GM12878 (cell line): ENCODE measurements at regions of chr4 and their contacts with region 1.

Region 1: DNA sequence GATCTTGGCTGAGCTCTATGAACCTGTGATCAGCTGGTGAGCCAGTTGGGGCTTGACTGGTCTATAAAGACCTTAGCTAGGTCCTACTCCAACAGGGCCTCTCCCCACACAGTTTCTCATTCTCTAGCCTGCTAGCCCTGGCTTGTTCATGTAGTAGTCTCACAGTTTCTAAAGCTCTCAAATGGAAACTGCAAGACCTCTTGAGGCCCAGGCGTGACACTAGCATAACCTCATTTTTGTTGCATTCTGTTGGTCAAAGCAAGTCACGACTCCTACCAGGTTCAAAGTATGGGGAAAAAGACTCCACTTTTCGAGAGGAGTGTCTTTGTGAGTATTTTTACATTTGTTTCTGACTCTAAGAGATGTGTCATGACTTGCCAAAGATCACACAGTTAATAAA is 50.9 kb downstream of the CEP44 start:
- DNase-seq: peak; percentile 40
- ATAC-seq: peak; percentile 98
- H3K4me3 ChIP-seq: no peak overlapping the region
- H3K27ac ChIP-seq: peak overlapping the region; percentile 65; the same call in 1 of the 2 replicates
- H3K4me1 ChIP-seq: peaks cover 7% of the 10 kb centered on the region; the same call in 1 of the 2 replicates
- H3K27me3 ChIP-seq: no peaks in the 10 kb centered on the region
- CTCF ChIP-seq: no peak
- EP300 ChIP-seq: no peak
- POLR2A ChIP-seq: no peak
- RAD21 ChIP-seq: 0 out of 2 replicates have a peak, but pooled peaks have one; percentile 12

Region 2: DNA sequence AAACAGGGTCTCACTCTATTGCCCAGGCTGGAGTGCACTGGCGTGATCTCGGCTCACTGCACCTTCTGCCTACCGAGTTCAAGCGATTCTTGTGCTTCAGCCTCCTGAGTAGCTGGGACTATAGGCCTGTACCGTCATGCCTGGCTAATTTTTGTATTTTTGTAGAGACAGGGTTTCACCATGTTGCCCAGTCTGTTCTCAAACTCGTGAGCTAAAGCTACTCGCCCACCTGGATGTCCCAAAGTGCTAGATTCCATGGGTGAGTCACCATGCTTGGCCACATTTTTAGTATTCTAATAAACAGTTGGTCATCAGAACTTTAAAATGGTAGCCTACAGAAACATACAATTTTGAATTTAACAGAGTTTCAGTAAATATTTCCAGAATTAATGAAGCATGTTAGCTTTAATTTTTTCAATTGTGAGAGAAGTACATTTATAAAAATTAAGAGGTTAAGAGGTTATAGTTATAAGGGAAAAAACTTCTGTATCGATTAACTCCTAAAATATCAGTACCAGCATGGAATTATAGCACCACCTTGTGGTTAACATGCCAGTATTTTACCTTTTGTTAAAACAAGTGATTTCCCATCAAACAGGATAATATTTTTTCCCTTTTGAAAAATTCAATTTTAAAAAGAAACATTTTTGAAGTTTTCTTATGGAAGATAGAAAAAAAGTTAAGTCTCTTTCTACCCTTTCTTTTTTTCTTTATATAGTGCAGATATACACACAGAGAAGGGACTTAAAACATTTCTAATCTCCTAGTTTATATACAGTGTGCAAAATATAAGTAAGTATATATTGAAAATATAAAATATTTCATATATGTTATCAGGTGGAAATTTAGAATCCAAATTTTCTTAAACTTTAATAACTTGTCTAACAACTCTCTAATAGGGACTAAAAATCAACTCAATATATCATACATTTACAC is 15.5 kb before region 1 on chr4:
- CTCF ChIA-PET with region 1: interaction called, 10 read pairs
- POLR2A ChIA-PET with region 1: no interaction called
- RAD21 ChIA-PET with region 1: no interaction called
- SMC1A ChIA-PET with region 1: interaction called, 5 read pairs
- in situ Hi-C with region 1: no loop called
- intact Hi-C with region 1: no loop called
- DNase-seq: no peak
- ATAC-seq: peak; percentile 55
- H3K4me3 ChIP-seq: no peak overlapping the region
- H3K27ac ChIP-seq: no peak overlapping the region
- H3K4me1 ChIP-seq: no peaks in the 10 kb centered on the region
- H3K27me3 ChIP-seq: no peaks in the 10 kb centered on the region
- CTCF ChIP-seq: peak; percentile 42 to 67 (median 46); a peak in 5 of 6 replicates
- EP300 ChIP-seq: no peak
- POLR2A ChIP-seq: no peak
- RAD21 ChIP-seq: peak; percentile 76

Region 3: GRCh38 chr4:174358829-174359228 is 24.2 kb after region 1 on chr4:
- CTCF ChIA-PET with region 1: interaction called, 5 read pairs
- POLR2A ChIA-PET with region 1: interaction called, 3 read pairs
- RAD21 ChIA-PET with region 1: interaction called, 15 read pairs
- SMC1A ChIA-PET with region 1: interaction called, 8 read pairs
- in situ Hi-C with region 1: no loop called
- intact Hi-C with region 1: no loop called
- DNase-seq: peak; percentile 40
- ATAC-seq: peak; percentile 97
- H3K4me3 ChIP-seq: no peak overlapping the region
- H3K27ac ChIP-seq: no peak overlapping the region
- H3K4me1 ChIP-seq: peaks cover 14% of the 10 kb centered on the region
- H3K27me3 ChIP-seq: no peaks in the 10 kb centered on the region
- CTCF ChIP-seq: no peak
- EP300 ChIP-seq: peak; percentile 53 to 70; a peak in 3 of 4 replicates
- POLR2A ChIP-seq: no peak
- RAD21 ChIP-seq: no peak

Region 4: DNA sequence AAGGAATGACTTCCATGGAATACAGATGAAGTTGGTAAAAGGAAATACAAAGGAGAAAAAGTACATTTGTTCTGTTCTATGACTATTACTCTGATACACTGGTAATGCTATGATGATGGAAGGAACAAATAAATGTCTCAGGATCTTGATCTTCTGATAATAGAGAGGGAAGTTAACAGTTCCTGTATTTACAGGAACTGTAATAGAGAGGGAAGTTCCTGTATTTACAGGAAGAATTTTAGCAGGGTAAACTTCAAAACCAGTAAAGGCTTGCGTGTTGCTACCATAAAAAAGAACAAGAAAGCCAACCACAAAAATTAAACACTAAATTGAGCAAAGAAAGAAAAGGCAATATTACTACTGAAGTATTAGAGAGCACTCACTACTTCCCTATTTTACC is 279.4 kb after region 1 on chr4:
- CTCF ChIA-PET with region 1: no interaction called
- POLR2A ChIA-PET with region 1: no interaction called
- RAD21 ChIA-PET with region 1: no interaction called
- SMC1A ChIA-PET with region 1: no interaction called
- in situ Hi-C with region 1: no loop called
- intact Hi-C with region 1: no loop called
- DNase-seq: no peak
- ATAC-seq: no peak
- H3K4me3 ChIP-seq: no peak overlapping the region
- H3K27ac ChIP-seq: no peak overlapping the region
- H3K4me1 ChIP-seq: no peaks in the 10 kb centered on the region
- H3K27me3 ChIP-seq: no peaks in the 10 kb centered on the region; a peak in 1 of 4 replicates
- CTCF ChIP-seq: no peak
- EP300 ChIP-seq: no peak
- POLR2A ChIP-seq: no peak
- RAD21 ChIP-seq: no peak